ENCODE measurements at regions of chr17 and their contacts with region 1.

Region 1: DNA sequence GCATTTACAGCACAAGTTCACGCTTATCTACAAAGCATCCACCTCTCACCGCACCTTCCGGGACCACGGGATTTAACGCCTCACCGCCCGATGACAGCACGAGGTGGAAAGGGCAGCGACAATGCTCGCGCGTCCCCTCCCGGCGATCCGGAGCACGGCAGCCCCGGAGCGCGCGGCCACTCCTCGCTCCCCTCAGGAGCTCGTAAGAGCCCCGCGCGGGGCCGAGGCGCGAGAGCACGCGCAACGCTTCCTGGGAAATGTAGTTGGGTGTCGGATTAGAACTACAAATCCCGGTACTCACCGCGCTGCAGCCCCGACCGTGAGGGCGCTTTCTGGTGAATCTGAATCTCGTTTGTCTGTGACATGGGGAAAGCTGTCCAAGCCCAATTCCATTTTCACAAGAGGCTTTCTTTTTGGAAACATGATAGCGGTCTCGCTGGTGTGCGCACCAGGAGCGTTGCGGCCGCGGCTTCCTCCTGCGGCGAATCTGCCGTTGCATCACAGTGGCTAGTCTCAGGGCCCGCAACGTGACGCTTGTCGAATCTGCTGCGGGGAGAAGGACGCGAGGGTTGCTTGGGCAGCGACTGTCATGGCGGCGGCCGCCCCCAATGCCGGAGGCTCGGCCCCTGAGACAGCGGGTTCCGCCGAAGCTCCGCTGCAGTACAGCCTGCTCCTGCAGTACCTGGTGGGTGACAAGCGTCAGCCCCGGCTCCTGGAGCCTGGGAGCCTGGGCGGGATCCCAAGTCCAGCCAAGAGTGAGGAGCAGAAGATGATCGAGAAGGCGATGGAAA is at the start of gene TIMM22:
- DNase-seq: peak; percentile 68
- H3K4me3 ChIP-seq: peak within 1 kb of the TSS; percentile 87 to 98 (median 96)
- H3K27ac ChIP-seq: peak within 1 kb of the TSS; percentile 99
- H3K4me1 ChIP-seq: peaks cover 23% of the 10 kb centered on the region
- H3K27me3 ChIP-seq: no peaks in the 10 kb centered on the region
- CTCF ChIP-seq: peak; percentile 94 to 96 (median 94)
- polyA plus RNA-seq, gene TIMM22: 11.1 to 24.8 TPM (median 14.4 TPM) in 3 replicates

Region 2: DNA sequence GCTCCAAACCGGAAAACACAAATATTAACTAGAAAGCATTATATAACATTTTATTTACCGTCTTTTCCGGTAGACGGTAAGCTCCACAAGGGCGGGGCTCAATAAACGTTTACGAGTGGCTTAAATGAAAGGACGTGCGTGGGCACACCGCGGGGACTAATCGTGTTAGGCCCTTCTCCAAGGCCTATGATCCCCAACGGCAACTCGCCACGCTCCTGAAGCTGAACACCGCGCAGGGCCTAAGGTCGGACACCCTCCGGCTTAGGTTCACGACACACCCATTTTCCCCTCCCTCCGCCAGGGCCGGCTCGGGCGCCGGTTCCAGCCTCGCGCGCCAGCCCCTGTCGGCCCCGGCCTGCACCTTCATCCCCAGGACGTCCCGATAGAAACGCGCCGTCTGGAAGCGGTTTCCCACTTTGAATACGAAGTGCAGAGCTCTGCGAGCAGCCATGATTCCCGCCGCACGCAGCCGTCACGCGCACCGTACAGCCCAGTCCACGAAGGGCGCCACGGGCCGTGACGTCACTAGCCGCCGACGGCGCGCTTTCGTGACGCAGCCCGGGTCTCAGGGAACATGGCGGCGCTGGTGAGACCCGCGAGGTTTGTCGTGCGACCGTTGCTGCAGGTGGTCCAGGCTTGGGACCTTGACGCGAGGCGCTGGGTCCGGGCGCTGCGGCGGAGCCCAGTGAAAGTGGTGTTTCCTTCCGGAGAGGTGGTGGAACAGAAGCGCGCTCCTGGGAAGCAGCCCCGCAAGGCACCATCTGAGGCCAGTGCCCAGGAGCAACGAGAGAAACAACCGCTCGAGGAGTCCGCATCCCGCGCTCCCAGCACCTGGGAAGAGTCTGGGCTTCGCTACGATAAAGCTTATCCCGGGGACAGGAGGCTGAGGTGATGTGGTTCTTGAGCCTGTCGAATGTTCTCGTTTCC is 214.7 kb before region 1 on chr17 and contains the starts of genes GLOD4 and MRM3:
- dilution Hi-C with region 1: loop called (anchors 25 kb)
- DNase-seq: peak; percentile 26
- H3K4me3 ChIP-seq: peak within 1 kb of the TSS; percentile 95 to 99 (median 99)
- H3K27ac ChIP-seq: peak within 1 kb of the TSS; percentile 90
- H3K4me1 ChIP-seq: peaks cover 20% of the 10 kb centered on the region
- H3K27me3 ChIP-seq: no peaks in the 10 kb centered on the region
- CTCF ChIP-seq: peak in 1 of 3 experiments; percentile 18
- polyA plus RNA-seq, gene GLOD4: 47.1 to 71.9 TPM (median 62.8 TPM) in 3 replicates
- polyA plus RNA-seq, gene MRM3: 10.9 to 15.5 TPM (median 11.5 TPM) in 3 replicates